A673 (cell line): ENCODE measurements at regions of chr5 and their contacts with region 1.

Region 1: DNA sequence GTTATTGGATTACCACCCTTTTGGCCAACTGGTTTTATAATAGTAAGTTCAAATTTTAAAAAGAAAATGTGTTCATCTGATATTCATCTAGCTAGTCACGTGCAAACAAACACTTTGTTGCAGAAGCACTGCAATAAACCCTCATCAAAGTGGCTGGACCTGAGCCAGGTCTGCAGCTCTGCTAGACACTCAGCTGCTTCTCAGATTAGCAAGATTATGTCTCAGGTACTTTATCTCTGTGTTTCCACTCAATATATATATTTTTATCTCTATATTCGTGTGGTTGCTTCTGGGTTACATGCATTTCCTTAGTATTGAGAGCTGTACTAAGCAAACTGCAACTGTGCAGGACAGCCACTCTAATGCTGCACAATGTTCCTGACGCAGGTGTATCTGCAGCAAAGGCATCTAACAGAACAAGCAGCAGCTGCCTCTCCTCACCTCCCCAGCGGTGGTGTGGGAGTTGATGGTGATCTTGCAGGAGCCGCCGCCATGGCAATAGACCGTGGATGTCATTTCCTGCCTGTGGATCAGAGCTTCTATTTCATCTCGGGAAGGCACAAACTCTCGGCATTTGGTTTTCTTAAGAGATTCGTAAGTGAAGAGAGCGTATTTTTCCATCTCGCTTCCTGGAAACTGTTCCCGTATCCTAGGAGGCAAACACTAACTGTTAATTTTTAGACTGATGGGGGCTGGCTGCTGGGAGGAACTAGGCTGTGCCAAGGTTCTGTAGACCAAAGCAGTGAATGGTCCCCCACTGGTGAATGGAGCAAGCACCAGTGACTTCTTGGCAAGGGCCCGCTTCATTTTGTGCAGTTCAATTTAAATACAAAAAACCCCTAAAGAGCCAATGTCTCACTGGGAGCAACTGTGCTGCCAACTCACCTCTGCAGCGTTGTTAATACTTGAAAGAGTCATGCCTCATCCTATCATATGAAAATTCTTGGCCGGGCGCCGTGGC is 56.7 kb upstream of the RETREG1 start:
- DNase-seq: no peak
- H3K4me3 ChIP-seq: no peak overlapping the region
- H3K27ac ChIP-seq: no peak overlapping the region
- H3K4me1 ChIP-seq: peaks cover 13% of the 10 kb centered on the region
- H3K27me3 ChIP-seq: no peaks in the 10 kb centered on the region
- CTCF ChIP-seq: no peak

Region 2: DNA sequence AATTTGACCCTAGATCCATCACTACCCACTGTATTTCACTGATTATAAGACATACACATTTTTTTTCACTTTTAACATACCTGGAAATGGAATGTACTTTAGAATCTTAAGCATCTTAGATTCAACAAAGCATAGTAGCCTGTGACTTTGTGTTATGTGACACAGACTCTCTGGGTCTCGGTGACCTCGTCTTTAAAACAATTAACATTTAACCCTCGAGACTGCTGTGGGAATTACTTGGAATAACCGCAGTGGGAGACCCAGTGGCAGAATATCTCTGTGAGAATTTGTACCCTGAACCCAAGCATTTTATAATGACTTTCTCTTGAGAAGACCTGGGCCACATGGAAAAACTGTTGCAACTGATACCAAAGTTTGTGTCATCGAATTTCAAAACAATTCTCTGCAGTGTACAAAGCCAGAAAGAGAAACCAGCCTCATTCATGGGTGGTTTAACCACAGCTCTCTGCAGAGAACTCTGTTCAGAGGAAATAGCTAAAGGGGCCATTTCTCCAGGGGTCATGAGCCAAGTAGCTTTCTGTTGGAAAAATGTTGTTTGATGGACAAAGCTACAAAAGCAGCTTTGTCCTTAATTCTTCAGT is 46.8 kb before region 1 on chr5:
- CTCF ChIA-PET with region 1: no interaction called
- POLR2A ChIA-PET with region 1: interaction called, 14 read pairs
- intact Hi-C with region 1: no loop called
- DNase-seq: no peak
- H3K4me3 ChIP-seq: no peak overlapping the region
- H3K27ac ChIP-seq: no peak overlapping the region
- H3K4me1 ChIP-seq: no peaks in the 10 kb centered on the region
- H3K27me3 ChIP-seq: no peaks in the 10 kb centered on the region
- CTCF ChIP-seq: no peak

Region 3: GRCh38 chr5:16727755-16728325 is 54.3 kb after region 1 on chr5:
- CTCF ChIA-PET with region 1: no interaction called
- POLR2A ChIA-PET with region 1: no interaction called
- intact Hi-C with region 1: no loop called
- DNase-seq: no peak
- H3K4me3 ChIP-seq: no peak overlapping the region
- H3K27ac ChIP-seq: no peak overlapping the region
- H3K4me1 ChIP-seq: peaks cover 13% of the 10 kb centered on the region
- H3K27me3 ChIP-seq: no peaks in the 10 kb centered on the region
- CTCF ChIP-seq: no peak